Activated CD4-positive, alpha-beta T cell treated with anti-CD3 and anti-CD28 coated beads for 36 hours (primary cell): ENCODE measurements at regions of chr5 and their contacts with region 1.

Region 1: GRCh38 chr5:892394-893136 is at the starts of genes BRD9 and TRIP13:
- DNase-seq: peak; percentile 93
- ATAC-seq: peak; percentile 98
- H3K4me3 Mint-ChIP-seq: peak within 1 kb of the TSS; percentile 90
- H3K27ac Mint-ChIP-seq: peak within 1 kb of the TSS; percentile 85
- H3K4me1 Mint-ChIP-seq: peaks cover 36% of the 10 kb centered on the region
- H3K27me3 Mint-ChIP-seq: no peaks in the 10 kb centered on the region
- total RNA-seq, gene BRD9: 46.7 to 49.7 TPM
- total RNA-seq, gene TRIP13: 34.4 to 34.7 TPM

Region 2: DNA sequence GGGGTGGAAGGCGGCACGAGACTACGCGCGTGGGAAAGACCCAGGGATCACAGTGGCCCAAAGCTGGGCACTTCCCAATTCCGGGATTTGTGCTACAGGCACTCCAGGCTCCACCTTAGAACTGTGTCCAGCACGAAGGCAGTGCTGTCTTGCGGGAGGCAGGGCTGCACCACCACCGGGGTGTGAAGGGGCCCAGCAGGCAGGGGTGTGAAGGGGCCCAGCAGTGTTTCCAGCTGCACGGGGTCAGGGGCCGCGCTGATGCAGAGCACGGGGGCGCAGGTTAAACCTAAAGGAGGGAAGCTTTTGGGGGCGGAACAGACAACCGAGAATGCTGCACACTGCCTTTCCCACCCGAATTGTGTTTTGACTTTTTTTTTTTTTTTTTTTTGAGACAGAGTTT is 622.2 kb before region 1 on chr5:
- CTCF ChIA-PET with region 1: no interaction called
- POLR2A ChIA-PET with region 1: no interaction called
- intact Hi-C with region 1: loop called in 1 of 2 experiments (anchors 2 kb)
- DNase-seq: no peak
- ATAC-seq: no peak
- H3K4me3 Mint-ChIP-seq: peak overlapping the region; percentile 95
- H3K27ac Mint-ChIP-seq: peak overlapping the region; percentile 47
- H3K4me1 Mint-ChIP-seq: peaks cover 41% of the 10 kb centered on the region
- H3K27me3 Mint-ChIP-seq: no peaks in the 10 kb centered on the region

Region 3: GRCh38 chr5:472656-473553 is 419.7 kb before region 1 on chr5:
- CTCF ChIA-PET with region 1: no interaction called
- POLR2A ChIA-PET with region 1: no interaction called
- intact Hi-C with region 1: loop called in 1 of 2 experiments (anchors 2 kb)
- DNase-seq: peak; percentile 93
- ATAC-seq: peak; percentile 80
- H3K4me3 Mint-ChIP-seq: peak overlapping the region; percentile 88
- H3K27ac Mint-ChIP-seq: peak overlapping the region; percentile 93
- H3K4me1 Mint-ChIP-seq: peaks cover 25% of the 10 kb centered on the region
- H3K27me3 Mint-ChIP-seq: peaks cover 4% of the 10 kb centered on the region

Region 4: DNA sequence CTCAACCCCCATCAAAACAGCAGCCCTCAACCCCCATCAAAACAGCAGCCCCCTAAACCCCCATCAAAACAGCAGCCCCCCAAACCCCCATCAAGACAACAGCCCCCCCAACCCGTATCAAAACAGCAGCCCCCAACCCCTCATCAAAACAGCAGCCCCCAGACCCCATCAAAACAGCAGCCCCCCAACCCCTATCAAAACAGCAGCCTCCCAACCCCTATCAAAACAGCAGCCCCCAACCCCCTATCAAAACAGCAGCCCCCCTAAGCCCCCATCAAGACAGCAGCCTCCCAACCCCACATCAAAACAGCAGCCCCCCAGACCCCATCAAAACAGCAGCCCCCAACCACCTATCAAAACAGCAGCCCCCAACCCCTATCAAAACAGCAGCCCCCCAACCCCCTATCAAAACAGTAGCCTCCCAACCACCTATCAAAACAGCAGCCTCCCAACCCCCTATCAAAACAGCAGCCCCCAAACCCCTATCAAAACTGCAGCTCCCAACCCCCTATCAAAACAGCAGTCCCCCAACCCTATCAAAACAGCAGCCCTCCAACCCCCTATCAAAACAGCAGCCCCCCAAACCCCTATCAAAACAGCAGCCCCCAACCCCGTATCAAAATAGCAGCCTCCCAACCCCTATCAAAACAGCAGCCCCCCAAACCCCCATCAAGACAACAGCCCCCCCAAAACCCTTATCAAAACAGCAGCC is 200.6 kb before region 1 on chr5:
- CTCF ChIA-PET with region 1: no interaction called
- POLR2A ChIA-PET with region 1: no interaction called
- intact Hi-C with region 1: loop called in 1 of 2 experiments (anchors 2 kb)
- DNase-seq: no peak
- ATAC-seq: no peak
- H3K4me3 Mint-ChIP-seq: peak overlapping the region; percentile 19
- H3K27ac Mint-ChIP-seq: no peak overlapping the region
- H3K4me1 Mint-ChIP-seq: no peaks in the 10 kb centered on the region
- H3K27me3 Mint-ChIP-seq: peaks cover 3% of the 10 kb centered on the region

Region 5: DNA sequence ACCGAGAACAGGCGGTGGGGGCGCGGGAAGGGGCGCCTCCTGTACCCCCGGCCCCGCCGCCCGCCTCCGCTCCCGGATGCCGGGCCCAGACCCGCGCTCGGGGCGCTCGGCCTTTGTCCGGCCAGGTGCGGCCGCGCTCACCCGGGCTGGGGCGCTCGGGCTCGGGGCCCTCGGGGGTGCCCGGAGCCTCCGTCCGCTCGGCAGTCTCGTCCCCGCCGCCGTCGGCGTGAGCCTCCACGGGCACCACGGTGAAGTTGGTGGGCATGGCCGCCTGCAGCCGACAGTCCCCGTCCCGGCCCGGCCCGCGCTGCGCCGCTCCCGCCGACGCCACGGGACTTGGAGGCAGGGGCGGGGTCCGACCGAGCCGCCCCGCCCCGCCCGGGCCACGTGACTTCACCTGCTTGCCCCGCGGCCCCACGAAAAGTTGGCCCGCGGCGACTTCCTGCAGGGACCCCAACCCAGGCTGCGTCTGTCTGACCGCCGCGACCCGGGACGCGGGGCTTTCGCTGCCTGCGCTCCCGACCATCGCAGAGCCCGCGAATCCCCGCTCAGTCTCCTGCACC is 219.2 kb after region 1 on chr5 and contains the start of gene SLC12A7:
- CTCF ChIA-PET with region 1: no interaction called
- POLR2A ChIA-PET with region 1: no interaction called
- intact Hi-C with region 1: loop called in 1 of 2 experiments (anchors 2 kb)
- DNase-seq: peak; percentile 84
- ATAC-seq: peak; percentile 76
- H3K4me3 Mint-ChIP-seq: peak within 1 kb of the TSS; percentile 82
- H3K27ac Mint-ChIP-seq: peak within 1 kb of the TSS; percentile 75
- H3K4me1 Mint-ChIP-seq: peaks cover 33% of the 10 kb centered on the region
- H3K27me3 Mint-ChIP-seq: no peaks in the 10 kb centered on the region
- total RNA-seq, gene SLC12A7: 18.5 to 21.6 TPM

Region 6: GRCh38 chr5:1633605-1634336 is 741.2 kb after region 1 on chr5:
- CTCF ChIA-PET with region 1: no interaction called
- POLR2A ChIA-PET with region 1: no interaction called
- intact Hi-C with region 1: loop called in 1 of 2 experiments (anchors 1 kb)
- DNase-seq: peak; percentile 85
- ATAC-seq: peak; percentile 90
- H3K4me3 Mint-ChIP-seq: peak overlapping the region; percentile 89
- H3K27ac Mint-ChIP-seq: peak overlapping the region; percentile 95
- H3K4me1 Mint-ChIP-seq: peaks cover 33% of the 10 kb centered on the region
- H3K27me3 Mint-ChIP-seq: no peaks in the 10 kb centered on the region

Region 7: DNA sequence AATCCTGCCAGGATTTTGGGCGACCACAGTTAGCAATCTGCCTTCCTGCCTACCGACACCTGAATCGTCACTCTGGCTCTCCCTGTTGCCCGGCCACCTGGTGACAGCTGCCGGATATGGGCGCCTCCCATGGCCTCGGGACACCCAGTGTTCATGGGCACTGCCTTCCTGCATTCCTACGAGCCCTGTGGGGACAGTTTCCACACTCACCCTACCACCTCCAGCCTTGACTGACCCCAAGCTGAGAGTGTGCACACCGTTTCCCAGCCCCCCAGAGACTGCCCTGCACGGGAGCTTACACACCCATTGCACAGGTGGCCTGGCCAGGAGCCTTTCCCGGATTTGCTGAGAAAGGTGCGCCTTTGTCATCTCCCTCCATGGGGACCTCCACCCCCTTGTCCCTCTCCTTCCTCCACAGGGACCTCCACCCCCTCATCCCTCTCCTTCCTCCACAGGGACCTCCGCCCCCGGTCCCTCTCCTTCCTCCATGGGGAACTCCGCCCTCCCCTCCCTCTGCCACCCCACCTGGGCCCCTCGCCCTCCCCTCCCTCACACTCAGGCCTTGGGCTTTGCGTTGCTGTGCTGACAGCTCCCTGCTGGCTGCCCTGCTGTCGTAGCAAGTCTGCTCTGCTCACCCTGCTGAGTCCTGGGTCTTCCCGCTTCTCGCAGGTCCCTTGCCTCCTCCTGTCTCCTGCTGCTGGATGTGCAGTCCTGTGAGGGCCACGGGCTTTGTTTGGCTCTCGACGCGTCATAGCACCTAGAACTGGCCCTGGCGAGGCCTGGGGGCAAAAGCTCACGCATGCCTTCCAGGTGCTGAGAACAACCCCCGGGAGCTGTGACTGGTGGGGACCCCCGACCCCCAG is 858.7 kb after region 1 on chr5:
- CTCF ChIA-PET with region 1: no interaction called
- POLR2A ChIA-PET with region 1: no interaction called
- intact Hi-C with region 1: no loop called
- DNase-seq: peak; percentile 3
- ATAC-seq: no peak
- H3K4me3 Mint-ChIP-seq: no peak overlapping the region
- H3K27ac Mint-ChIP-seq: no peak overlapping the region
- H3K4me1 Mint-ChIP-seq: no peaks in the 10 kb centered on the region
- H3K27me3 Mint-ChIP-seq: peaks cover 2% of the 10 kb centered on the region